Aorta (tissue), 5 donors: ENCODE measurements at regions of chr11 and their contacts with region 1.

Region 1: GRCh38 chr11:46121724-46122477 is 647 bp upstream of the PHF21A start:
- DNase-seq: peak; percentile 87 to 90
- ATAC-seq: peak; percentile 45
- H3K4me3 ChIP-seq: peak overlapping the region; percentile 96 to 100
- H3K27ac ChIP-seq: peak overlapping the region; percentile 57 to 78
- H3K4me1 ChIP-seq: peaks cover 0 to 5% of the 10 kb centered on the region in 2 donors
- H3K27me3 ChIP-seq: no peaks in the 10 kb centered on the region

Region 2: GRCh38 chr11:45964911-45965389 is 157.0 kb before region 1 on chr11:
- intact Hi-C with region 1: loop called in 1 of 2 experiments (anchors 10 kb)
- DNase-seq: peak in 1 of 2 donors; percentile 62
- ATAC-seq: peak; percentile 91
- H3K4me3 ChIP-seq: no peak overlapping the region
- H3K27ac ChIP-seq: no peak overlapping the region
- H3K4me1 ChIP-seq: no peaks in the 10 kb centered on the region
- H3K27me3 ChIP-seq: no peaks in the 10 kb centered on the region

Region 3: DNA sequence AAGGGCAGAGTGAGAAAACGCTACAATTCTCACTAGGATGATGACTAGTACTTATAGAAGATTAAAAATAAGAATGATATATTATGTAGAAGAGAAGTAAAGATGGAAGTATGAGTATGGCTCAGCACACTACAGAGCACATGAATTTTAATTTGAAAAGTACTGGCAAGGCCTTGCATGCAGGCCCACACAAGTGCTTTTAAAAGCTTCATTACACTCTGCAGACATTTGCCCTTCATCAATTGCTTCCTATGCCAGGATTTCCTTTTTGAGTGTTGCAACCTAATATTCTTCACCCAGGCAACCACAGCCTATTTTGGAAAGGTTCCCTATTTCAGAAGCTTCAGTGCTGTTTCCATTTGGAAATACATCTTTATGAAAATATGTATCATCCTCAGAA is 118.3 kb before region 1 on chr11:
- intact Hi-C with region 1: no loop called
- DNase-seq: no peak
- ATAC-seq: no peak
- H3K4me3 ChIP-seq: no peak overlapping the region
- H3K27ac ChIP-seq: no peak overlapping the region
- H3K4me1 ChIP-seq: peaks cover 0 to 6% of the 10 kb centered on the region in 2 donors
- H3K27me3 ChIP-seq: no peaks in the 10 kb centered on the region

Region 4: DNA sequence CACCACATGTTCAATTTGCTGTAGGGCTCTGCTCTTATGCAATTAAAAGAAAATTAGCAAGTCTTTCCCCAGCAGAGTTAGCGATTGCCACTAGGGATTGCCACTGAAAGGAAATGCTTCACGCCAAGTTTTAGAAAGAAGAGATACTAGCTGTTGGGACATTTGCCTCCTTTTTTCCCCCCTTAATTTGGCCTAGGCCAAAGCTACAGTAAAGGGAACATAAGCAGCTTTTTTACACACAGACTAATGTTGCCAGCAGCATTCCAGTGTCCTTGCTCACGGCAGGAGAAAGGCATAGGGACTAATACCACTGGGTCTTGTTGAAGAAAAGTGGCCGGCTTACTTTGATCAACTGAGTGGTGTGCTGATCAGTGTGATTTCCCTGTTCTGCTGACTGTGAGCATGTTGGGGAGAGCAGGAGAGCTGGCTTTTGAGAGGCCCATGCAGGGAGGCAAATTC is 71.9 kb before region 1 on chr11:
- intact Hi-C with region 1: loop called in 1 of 2 experiments (anchors 10 kb)
- DNase-seq: peak; percentile 62 to 81
- ATAC-seq: peak; percentile 64
- H3K4me3 ChIP-seq: no peak overlapping the region
- H3K27ac ChIP-seq: peak overlapping the region in 1 of 2 donors; percentile 28
- H3K4me1 ChIP-seq: peaks cover 0 to 14% of the 10 kb centered on the region in 2 donors
- H3K27me3 ChIP-seq: no peaks in the 10 kb centered on the region

Region 5: DNA sequence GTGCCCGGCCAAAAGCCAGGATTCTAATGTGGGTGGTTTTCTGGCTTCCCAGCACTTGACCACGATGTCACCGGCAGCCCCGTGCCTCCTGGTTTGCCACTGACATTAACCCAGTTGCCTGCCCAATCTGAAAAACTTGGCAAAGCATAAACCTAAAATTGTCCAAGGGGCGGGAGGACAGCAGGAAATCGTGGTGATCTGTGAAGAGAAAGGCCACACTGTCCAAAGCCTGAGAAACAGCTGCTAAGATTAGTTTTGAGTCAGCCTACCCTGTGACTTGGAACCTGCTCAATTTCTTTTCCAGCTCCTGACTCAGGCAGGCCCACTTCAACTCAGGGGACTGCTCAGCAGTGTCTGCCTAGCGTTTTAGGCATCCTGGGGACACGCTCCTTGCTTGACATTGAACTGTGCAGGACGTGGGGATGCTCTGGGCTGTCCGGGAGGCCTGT is 588.9 kb after region 1 on chr11:
- intact Hi-C with region 1: loop called in 1 of 2 experiments (anchors 5 kb)
- DNase-seq: peak; percentile 87 to 89
- ATAC-seq: peak; percentile 93
- H3K4me3 ChIP-seq: no peak overlapping the region
- H3K27ac ChIP-seq: peak overlapping the region; percentile 85 to 94
- H3K4me1 ChIP-seq: peaks cover 2 to 5% of the 10 kb centered on the region in 2 donors
- H3K27me3 ChIP-seq: no peaks in the 10 kb centered on the region